Caco-2 (cell line): ENCODE measurements at regions of chr10 and their contacts with region 1.

Region 1: DNA sequence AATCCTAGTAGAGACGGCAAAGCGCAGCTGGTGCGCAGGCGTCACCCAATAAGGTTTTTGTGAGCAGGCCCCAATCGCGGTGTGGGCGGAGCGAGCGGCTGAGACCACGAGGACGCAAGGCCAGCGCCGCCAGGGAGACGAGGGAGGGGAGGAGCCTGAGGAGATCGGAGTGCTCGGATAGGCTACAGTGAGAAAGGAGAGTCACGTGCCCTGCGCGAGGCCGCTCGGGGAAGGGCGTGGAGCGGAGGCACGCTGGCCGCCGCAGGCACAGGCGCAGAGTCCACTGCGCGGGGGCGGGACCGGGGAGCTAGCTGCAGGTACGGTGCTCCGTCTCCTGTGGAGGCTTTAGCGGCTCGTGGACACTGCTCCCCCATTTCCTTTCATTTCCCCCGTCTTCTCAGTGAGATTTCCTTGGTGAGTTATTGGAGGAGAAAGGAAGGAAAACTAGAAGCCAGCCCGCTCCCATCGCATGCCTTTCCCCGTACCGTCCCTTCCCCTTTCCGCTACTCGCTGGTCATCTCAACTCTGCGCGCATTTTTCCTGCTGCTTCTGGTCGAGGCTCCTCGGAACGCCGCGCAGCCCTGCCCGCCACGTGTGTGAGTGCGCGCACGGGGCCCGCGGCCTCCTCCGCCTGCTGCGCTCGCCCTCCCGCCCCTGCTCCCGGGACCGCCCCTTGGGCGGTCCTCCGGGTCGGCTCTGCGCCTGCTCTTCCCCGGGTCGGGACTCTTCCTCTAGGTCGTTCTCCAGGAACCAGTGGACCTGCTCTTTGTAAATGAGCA is at the start of gene THNSL1:
- DNase-seq: peak; percentile 100
- H3K4me3 ChIP-seq: peak within 1 kb of the TSS; percentile 66
- H3K4me3 Mint-ChIP-seq: peak within 1 kb of the TSS; percentile 86
- H3K27ac Mint-ChIP-seq: peak within 1 kb of the TSS; percentile 97
- H3K4me1 ChIP-seq: peaks cover 8% of the 10 kb centered on the region; the same call in 1 of the 2 replicates
- H3K4me1 Mint-ChIP-seq: peaks cover 14% of the 10 kb centered on the region
- H3K27me3 ChIP-seq: no peaks in the 10 kb centered on the region
- H3K27me3 Mint-ChIP-seq: no peaks in the 10 kb centered on the region
- CTCF ChIP-seq: no peak
- total RNA-seq, gene THNSL1: 6.3 and 6.8 TPM in 2 replicates

Region 2: DNA sequence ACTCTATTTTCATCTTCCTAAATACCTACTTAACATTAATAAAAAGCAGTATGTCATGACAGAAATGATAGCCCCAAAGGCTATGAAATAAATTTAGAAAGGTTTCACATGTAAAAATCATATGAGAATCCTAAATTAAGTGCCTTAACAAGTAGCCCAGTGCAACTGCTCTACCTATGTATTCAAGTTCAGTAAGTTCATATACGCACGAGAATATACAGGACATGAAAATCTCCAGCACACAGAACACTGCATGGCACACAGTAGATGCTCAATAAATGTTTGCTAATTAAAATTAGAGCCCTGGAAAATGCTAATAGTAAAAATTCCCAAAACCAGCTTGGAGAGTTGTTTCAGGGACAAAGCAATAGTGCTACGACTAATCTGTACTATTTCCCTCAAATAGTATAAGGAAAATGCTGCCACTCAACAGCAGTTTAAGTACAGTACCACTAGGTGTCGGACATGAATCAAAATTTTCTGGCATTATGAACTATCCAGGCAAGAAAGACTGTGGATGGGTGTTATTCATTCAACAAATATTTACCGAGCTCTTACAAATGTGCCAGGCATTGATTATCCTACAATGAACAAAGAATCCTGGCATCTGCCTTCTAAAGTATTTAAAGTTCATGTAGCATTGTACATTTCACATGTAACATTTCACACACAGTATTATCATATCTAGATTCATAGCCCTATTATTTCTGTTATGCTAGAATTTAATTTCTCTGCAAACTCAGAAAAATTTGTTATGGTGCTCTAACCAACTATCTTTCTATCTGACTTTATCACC is 373.7 kb before region 1 on chr10:
- CTCF ChIA-PET with region 1: interaction called, 3 read pairs
- POLR2A ChIA-PET with region 1: no interaction called
- intact Hi-C with region 1: loop called (anchors 5 kb)
- DNase-seq: peak in 1 of 2 experiments; percentile 76
- H3K4me3 ChIP-seq: no peak overlapping the region
- H3K4me3 Mint-ChIP-seq: no peak overlapping the region
- H3K27ac Mint-ChIP-seq: no peak overlapping the region
- H3K4me1 ChIP-seq: peaks cover 5% of the 10 kb centered on the region
- H3K4me1 Mint-ChIP-seq: no peaks in the 10 kb centered on the region
- H3K27me3 ChIP-seq: no peaks in the 10 kb centered on the region
- H3K27me3 Mint-ChIP-seq: no peaks in the 10 kb centered on the region
- CTCF ChIP-seq: peak; percentile 85 to 89

Region 3: DNA sequence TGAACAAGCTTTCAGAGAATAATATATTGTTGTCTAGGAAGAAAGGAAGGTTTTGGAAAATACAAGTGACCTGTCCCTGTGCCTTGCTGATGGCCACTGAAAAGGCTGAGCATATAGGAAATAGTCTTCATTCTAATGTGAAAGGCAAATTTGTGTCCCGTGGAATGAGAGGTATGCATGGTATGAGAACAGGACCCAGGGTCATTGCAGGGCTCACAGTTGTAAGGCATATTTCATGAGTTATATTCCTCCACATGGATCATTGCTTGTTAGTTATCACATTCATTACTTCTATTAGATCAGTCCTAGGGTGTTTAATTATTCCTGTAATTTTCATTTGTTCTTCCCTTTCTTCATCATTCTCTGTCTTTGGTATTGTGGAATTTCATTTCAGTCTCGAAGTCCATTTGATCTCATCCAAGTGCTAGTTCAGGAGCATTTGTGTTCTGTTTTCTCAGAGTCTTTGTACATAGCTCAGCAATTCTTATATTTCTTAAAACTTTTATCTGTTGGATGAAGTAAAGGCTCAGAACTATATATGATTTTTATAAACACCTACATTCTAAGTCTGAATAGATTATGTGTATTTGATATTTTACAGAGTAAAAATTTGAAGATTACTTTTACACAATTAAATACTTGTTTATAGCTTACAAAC is 253.5 kb before region 1 on chr10:
- CTCF ChIA-PET with region 1: no interaction called
- POLR2A ChIA-PET with region 1: no interaction called
- intact Hi-C with region 1: loop called (anchors 1 kb)
- DNase-seq: peak; percentile 56 to 65
- H3K4me3 ChIP-seq: no peak overlapping the region
- H3K4me3 Mint-ChIP-seq: peak overlapping the region; percentile 15
- H3K27ac Mint-ChIP-seq: peak overlapping the region; percentile 10
- H3K4me1 ChIP-seq: peaks cover 27% of the 10 kb centered on the region
- H3K4me1 Mint-ChIP-seq: peaks cover 18% of the 10 kb centered on the region
- H3K27me3 ChIP-seq: no peaks in the 10 kb centered on the region
- H3K27me3 Mint-ChIP-seq: no peaks in the 10 kb centered on the region
- CTCF ChIP-seq: no peak

Region 4: DNA sequence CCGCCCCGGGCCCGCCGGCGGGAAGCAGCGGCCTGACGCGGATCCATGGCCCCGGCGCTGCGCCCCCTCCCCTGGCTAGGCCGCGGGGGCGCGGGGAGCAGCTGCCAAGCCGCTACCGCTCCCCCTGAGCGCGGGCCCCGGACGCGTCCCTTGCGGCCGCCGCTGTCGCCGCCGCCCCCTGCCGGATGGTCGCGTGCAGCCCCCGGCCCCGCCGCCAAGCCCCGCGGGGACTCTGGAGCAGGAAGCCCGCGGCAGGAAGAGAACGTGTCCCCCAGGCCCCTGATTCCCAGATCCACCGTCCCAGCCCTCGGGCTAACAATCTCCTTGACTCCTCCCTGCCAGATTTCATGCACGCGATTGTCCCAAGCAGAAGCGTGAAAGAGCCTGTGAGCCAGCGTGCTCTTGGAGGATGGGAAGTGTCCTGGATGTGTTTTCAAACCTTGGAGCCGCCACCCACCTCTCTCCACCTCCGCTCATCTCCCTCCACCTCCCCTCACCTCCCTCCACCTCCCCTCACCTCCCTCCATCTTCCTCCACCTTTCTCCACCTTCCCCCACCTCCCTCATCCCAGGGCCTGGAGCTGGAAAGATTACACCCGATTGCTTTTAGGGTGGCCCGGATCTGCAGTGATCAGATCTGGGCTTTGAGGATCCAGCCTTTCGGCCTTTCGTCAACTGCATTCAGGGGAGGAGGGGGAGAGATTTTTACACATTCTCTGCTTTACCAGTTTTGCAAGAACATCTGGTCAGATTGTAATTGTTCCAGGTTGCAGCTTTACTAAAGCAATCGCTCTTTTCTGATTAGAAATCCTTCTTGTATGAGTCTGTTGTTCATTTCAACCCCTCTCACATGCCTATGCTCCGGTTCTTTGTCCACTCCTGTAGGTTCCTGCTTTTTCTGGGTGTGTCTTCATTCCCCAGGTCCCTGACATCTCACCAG is 63.6 kb before region 1 on chr10:
- CTCF ChIA-PET with region 1: interaction called, 10 read pairs
- POLR2A ChIA-PET with region 1: no interaction called
- intact Hi-C with region 1: loop called (anchors 1 kb)
- DNase-seq: peak; percentile 85 to 91
- H3K4me3 ChIP-seq: peak overlapping the region; percentile 97
- H3K4me3 Mint-ChIP-seq: peak overlapping the region; percentile 84
- H3K27ac Mint-ChIP-seq: peak overlapping the region; percentile 90
- H3K4me1 ChIP-seq: peaks cover 32% of the 10 kb centered on the region
- H3K4me1 Mint-ChIP-seq: peaks cover 23% of the 10 kb centered on the region
- H3K27me3 ChIP-seq: no peaks in the 10 kb centered on the region
- H3K27me3 Mint-ChIP-seq: no peaks in the 10 kb centered on the region
- CTCF ChIP-seq: peak; percentile 47 to 72

Region 5: GRCh38 chr10:25036381-25036780 is 19.8 kb after region 1 on chr10:
- CTCF ChIA-PET with region 1: no interaction called
- POLR2A ChIA-PET with region 1: no interaction called
- intact Hi-C with region 1: loop called (anchors 1 kb)
- DNase-seq: no peak
- H3K4me3 ChIP-seq: no peak overlapping the region
- H3K4me3 Mint-ChIP-seq: no peak overlapping the region
- H3K27ac Mint-ChIP-seq: no peak overlapping the region
- H3K4me1 ChIP-seq: peaks cover 24% of the 10 kb centered on the region
- H3K4me1 Mint-ChIP-seq: peaks cover 33% of the 10 kb centered on the region
- H3K27me3 ChIP-seq: no peaks in the 10 kb centered on the region
- H3K27me3 Mint-ChIP-seq: no peaks in the 10 kb centered on the region
- CTCF ChIP-seq: no peak

Region 6: DNA sequence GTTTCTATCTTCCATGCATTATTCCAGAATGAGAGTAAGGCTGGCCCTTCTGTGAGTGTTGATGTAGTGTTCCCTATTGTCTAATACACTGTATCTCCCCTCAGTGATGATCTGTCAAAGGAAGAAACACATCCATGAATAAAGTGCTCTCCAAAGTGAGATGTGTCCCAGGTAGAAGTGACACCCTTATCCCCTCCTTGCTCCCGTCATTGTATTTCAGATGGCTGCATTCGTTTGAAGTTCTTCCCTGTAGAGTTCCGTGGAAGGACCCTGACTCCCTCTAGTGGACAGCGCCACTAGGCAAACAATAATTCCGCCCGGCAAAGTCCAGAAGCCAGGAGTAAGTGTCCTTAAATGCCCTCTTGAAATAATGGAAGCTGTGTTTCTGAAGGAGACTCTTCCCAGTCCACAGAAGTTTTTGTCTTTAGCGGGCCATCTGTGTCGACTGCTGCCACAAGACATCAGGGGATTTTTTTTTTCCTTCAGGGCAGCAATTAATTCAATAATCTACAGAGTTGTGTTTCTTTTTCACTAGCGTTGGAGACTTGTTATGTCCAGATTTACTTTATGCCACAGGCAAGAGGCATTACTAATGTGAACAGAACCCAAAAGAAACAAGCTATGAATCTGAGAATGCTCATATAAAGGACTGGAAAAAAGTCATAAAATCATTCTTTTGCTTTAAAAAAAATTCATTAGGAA is 64.5 kb after region 1 on chr10:
- CTCF ChIA-PET with region 1: interaction called, 4 read pairs
- POLR2A ChIA-PET with region 1: no interaction called
- intact Hi-C with region 1: loop called (anchors 1 kb)
- DNase-seq: peak; percentile 92 to 94
- H3K4me3 ChIP-seq: no peak overlapping the region
- H3K4me3 Mint-ChIP-seq: peak overlapping the region; percentile 26
- H3K27ac Mint-ChIP-seq: peak overlapping the region; percentile 42
- H3K4me1 ChIP-seq: peaks cover 64% of the 10 kb centered on the region
- H3K4me1 Mint-ChIP-seq: peaks cover 51% of the 10 kb centered on the region
- H3K27me3 ChIP-seq: no peaks in the 10 kb centered on the region
- H3K27me3 Mint-ChIP-seq: no peaks in the 10 kb centered on the region
- CTCF ChIP-seq: peak; percentile 98 to 99